Caco-2 (cell line): ENCODE measurements at regions of chr22 and their contacts with region 1.

Region 1: DNA sequence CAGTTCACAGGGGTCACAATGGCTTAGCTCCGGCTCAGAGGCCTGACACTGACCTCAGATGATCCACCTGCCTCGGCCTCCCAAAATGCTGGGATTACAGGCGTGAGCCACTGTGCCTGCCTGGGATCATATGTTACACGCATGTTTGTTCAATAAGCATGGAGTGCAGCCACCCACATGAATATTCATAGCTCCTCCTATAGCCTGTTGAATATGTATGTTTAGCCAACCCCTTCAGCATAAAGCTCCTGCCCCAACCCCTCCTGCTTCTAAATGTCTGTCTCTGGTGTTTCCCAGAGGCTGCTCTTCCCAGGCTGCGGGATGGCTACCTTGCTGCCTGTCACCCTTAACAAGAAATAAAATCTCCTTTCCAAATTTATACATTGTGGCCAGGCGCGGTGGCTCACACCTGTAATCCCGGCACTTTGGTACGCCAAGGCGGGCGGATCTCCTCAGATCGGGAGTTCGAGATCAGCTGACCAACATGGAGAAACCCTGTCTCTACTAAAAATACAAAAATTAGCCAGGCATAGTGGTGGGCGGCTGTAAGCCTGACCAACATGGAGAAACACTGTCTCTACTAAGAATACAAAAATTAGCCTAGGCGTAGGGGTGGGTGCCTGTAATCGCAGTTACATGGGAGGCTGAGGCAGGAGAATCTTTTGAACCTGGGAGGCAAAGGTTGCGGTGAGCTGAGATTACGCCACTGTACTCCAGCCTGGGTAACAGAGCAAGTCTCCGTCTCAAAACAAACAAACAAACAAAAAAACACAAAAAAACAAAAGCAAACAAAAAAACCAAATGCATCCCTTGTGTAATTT is 1.1 kb upstream of the APOBEC3F start:
- DNase-seq: no peak
- H3K4me3 ChIP-seq: no peak overlapping the region
- H3K4me3 Mint-ChIP-seq: peak overlapping the region; percentile 84
- H3K27ac Mint-ChIP-seq: peak overlapping the region; percentile 63
- H3K4me1 ChIP-seq: peaks cover 9% of the 10 kb centered on the region
- H3K4me1 Mint-ChIP-seq: peaks cover 16% of the 10 kb centered on the region
- H3K27me3 ChIP-seq: no peaks in the 10 kb centered on the region
- H3K27me3 Mint-ChIP-seq: no peaks in the 10 kb centered on the region
- CTCF ChIP-seq: no peak

Region 2: GRCh38 chr22:39097098-39098020 is 57.8 kb after region 1 on chr22 and contains the start of gene APOBEC3H:
- CTCF ChIA-PET with region 1: no interaction called
- POLR2A ChIA-PET with region 1: interaction called, 20 read pairs
- intact Hi-C with region 1: no loop called
- DNase-seq: no peak
- H3K4me3 ChIP-seq: no peak within 1 kb of the TSS
- H3K4me3 Mint-ChIP-seq: no peak within 1 kb of the TSS
- H3K27ac Mint-ChIP-seq: no peak within 1 kb of the TSS
- H3K4me1 ChIP-seq: no peaks in the 10 kb centered on the region
- H3K4me1 Mint-ChIP-seq: no peaks in the 10 kb centered on the region
- H3K27me3 ChIP-seq: no peaks in the 10 kb centered on the region
- H3K27me3 Mint-ChIP-seq: no peaks in the 10 kb centered on the region
- CTCF ChIP-seq: no peak
- total RNA-seq, gene APOBEC3H: not detected in 2 replicates

Region 3: DNA sequence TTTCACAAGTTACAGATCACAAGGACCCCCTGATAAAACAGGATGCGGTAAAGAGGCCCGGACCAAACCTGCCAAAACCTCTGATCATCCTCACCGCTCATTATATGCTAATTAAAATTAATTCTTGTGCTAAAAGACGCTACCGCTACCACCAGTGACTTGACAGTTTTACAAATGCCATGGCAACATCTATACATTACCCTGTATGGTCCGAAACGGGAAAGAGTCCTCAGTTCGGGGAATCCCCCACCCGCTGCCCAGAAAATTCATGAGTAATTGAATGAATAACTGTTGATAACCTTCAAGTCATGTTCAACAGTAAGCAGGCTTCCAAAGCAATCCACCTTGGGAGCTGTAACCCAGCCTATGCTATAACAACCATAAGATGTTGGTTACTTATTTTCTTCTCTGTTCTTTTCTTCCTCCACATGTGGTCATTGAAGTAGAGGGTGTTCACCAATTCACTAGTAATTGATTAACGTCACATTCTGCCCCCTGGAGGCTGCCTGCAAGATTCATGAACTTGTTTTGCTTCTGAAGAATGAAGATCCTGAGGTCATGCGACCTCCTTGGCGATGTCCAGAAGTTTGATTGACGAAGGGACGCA is 78.2 kb after region 1 on chr22:
- CTCF ChIA-PET with region 1: no interaction called
- POLR2A ChIA-PET with region 1: no interaction called
- intact Hi-C with region 1: loop called (anchors 10 kb)
- DNase-seq: peak; percentile 69 to 77
- H3K4me3 ChIP-seq: no peak overlapping the region
- H3K4me3 Mint-ChIP-seq: no peak overlapping the region
- H3K27ac Mint-ChIP-seq: peak overlapping the region; percentile 39
- H3K4me1 ChIP-seq: peaks cover 22% of the 10 kb centered on the region
- H3K4me1 Mint-ChIP-seq: peaks cover 25% of the 10 kb centered on the region
- H3K27me3 ChIP-seq: no peaks in the 10 kb centered on the region
- H3K27me3 Mint-ChIP-seq: no peaks in the 10 kb centered on the region
- CTCF ChIP-seq: peak; percentile 37 to 47